ENCODE measurements at regions of chr4 and their contacts with region 1.

Region 1: DNA sequence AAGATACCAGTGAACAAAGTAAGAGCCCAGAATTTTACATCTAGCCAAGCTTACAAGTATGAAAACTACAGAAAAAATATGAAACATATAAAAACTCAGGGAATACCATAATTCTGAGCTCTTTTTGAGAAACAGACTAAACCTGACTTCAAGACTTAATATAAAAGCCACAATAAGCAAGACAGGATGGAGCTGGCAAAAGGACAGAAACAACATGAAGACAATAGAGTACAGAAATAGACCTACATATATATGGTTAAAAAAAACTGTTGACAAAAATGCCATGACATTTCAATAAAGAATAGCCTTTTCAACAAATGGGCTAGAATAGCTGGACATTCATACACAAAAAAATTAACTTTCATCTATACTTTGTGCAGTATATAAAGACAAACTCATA is 49.4 kb downstream of the UBA6 start:
- DNase-seq: no peak
- H3K4me3 ChIP-seq: no peak overlapping the region
- H3K27ac ChIP-seq: no peak overlapping the region
- H3K4me1 ChIP-seq: no peaks in the 10 kb centered on the region
- H3K27me3 ChIP-seq: no peaks in the 10 kb centered on the region
- CTCF ChIP-seq: no peak

Region 2: DNA sequence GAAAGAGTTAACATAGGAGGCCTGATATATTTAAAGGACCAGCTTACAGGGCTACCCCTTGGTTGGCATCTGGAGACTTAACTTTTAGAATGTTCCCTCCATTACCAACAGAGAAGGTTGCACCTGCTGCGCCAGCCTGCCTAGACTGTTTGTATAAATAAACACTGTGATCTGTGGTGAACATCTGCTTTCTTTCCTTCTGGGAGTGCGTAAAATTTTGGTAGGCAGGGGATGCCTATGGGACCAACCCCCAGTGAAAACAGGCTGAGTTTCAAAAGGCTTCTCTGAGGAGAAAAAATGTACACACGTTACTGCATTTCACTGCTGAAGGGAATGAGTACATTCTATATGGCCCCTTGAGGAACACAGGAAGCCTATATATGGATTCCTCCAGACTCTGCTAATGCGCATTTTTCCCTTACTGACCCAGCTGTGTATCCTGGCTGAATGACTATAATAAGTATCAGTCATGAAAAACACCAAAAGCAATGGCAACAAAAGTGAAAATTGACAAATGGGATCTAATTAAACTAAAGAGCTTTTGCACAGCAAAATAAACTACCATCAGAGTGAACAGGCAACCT is 120.1 kb before region 1 on chr4:
- CTCF ChIA-PET with region 1: no interaction called
- POLR2A ChIA-PET with region 1: no interaction called
- intact Hi-C with region 1: no loop called
- DNase-seq: no peak
- H3K4me3 ChIP-seq: no peak overlapping the region
- H3K27ac ChIP-seq: no peak overlapping the region
- H3K4me1 ChIP-seq: no peaks in the 10 kb centered on the region
- H3K27me3 ChIP-seq: no peaks in the 10 kb centered on the region
- CTCF ChIP-seq: no peak

Region 3: GRCh38 chr4:67624939-67625338 is 26.6 kb before region 1 on chr4:
- CTCF ChIA-PET with region 1: no interaction called
- POLR2A ChIA-PET with region 1: no interaction called
- intact Hi-C with region 1: loop called (anchors 1 kb)
- DNase-seq: no peak
- H3K4me3 ChIP-seq: no peak overlapping the region
- H3K27ac ChIP-seq: no peak overlapping the region
- H3K4me1 ChIP-seq: no peaks in the 10 kb centered on the region
- H3K27me3 ChIP-seq: no peaks in the 10 kb centered on the region
- CTCF ChIP-seq: no peak

Measured in A673 (cell line).